Activated naive CD4-positive, alpha-beta T cell treated with anti-CD3 and anti-CD28 coated beads for 36 hours (primary cell): ENCODE measurements at regions of chrX and their contacts with region 1.

Region 1: GRCh38 chrX:31293409-31293808 is 221.6 kb upstream of the FTHL17 start:
- DNase-seq: no peak
- H3K4me3 Mint-ChIP-seq: no peak overlapping the region
- H3K27ac Mint-ChIP-seq: no peak overlapping the region
- H3K4me1 Mint-ChIP-seq: no peaks in the 10 kb centered on the region
- H3K27me3 Mint-ChIP-seq: no peaks in the 10 kb centered on the region

Region 2: DNA sequence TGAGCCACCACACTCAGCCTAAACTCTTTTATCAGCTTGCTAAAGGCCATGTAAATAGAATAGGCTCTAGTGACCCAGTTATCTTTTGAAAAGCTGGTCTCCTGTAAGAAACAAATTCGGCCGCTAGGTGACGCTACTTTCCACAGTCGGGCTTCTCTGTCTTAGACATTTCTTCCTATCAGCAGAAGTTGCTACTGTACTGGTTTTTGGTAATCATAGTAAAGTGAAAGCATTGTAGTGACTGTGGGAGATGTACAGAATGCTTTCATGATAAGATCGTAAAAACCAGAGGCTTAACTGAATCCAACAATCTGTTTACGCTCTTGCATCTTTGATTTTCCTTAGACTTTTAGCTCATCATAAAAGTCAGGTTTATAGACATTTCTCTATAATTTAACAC is 557.6 kb before region 1 on chrX:
- CTCF ChIA-PET with region 1: no interaction called
- intact Hi-C with region 1: no loop called
- DNase-seq: peak; percentile 90
- H3K4me3 Mint-ChIP-seq: no peak overlapping the region
- H3K27ac Mint-ChIP-seq: no peak overlapping the region
- H3K4me1 Mint-ChIP-seq: peaks cover 11% of the 10 kb centered on the region
- H3K27me3 Mint-ChIP-seq: no peaks in the 10 kb centered on the region

Region 3: GRCh38 chrX:30767454-30767853 is 526.0 kb before region 1 on chrX:
- CTCF ChIA-PET with region 1: no interaction called
- intact Hi-C with region 1: no loop called
- DNase-seq: no peak
- H3K4me3 Mint-ChIP-seq: no peak overlapping the region
- H3K27ac Mint-ChIP-seq: no peak overlapping the region
- H3K4me1 Mint-ChIP-seq: peaks cover 7% of the 10 kb centered on the region
- H3K27me3 Mint-ChIP-seq: no peaks in the 10 kb centered on the region

Region 4: DNA sequence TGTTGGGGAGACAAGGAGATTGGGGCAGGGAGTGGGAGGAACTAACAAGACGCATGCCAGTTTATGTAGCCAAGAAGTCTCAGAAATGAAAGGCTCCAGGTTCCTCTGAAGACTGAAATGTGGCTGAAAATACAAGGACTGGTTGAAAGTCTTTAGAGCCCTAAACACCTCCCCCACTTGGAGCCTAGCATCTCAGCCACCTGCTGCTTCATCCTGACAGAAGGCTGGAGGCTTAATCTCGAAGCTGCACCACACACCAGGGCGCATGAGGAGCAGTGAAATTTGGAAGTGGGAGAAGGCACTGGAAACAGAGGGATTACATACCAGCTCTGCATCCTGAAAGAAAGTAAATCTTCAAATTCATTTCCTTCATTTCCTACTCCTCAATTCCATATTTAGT is 60.9 kb before region 1 on chrX:
- CTCF ChIA-PET with region 1: no interaction called
- intact Hi-C with region 1: loop called (anchors 1 kb)
- DNase-seq: no peak
- H3K4me3 Mint-ChIP-seq: no peak overlapping the region
- H3K27ac Mint-ChIP-seq: no peak overlapping the region
- H3K4me1 Mint-ChIP-seq: no peaks in the 10 kb centered on the region
- H3K27me3 Mint-ChIP-seq: no peaks in the 10 kb centered on the region